PC-9 (cell line): ENCODE measurements at regions of chr4 and their contacts with region 1.

Region 1: DNA sequence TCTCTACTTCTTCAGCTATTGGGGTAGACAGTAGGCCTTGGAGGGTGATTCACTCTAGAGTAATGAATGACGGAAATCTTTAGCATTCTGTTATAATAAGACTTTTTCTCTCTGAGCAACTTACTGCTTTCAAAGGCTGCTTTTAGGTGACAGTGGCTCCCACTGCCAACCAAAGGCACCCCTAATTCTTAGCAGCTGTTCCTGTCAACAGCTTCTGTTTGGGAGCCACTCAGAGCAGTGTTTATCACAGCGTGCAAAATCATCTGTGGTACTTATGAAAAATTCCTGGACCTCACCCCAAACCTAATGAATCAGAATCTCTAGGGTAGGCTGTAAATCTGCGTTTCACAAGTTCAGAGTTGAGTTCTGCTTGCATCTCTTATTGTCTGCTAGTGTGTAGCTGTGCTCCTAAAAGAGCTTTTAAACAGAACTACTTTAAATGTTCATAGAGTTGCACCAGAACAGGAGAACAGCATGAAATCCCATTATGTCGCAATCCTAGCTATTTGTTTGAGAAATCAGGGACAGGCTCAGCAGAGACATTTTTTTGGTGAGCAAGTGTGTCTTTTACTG is 52.8 kb upstream of the POU4F2 start:
- DNase-seq: no peak
- H3K4me3 ChIP-seq: no peak overlapping the region
- H3K27ac ChIP-seq: no peak overlapping the region
- H3K4me1 ChIP-seq: no peaks in the 10 kb centered on the region
- H3K27me3 ChIP-seq: no peaks in the 10 kb centered on the region
- CTCF ChIP-seq: no peak

Region 2: DNA sequence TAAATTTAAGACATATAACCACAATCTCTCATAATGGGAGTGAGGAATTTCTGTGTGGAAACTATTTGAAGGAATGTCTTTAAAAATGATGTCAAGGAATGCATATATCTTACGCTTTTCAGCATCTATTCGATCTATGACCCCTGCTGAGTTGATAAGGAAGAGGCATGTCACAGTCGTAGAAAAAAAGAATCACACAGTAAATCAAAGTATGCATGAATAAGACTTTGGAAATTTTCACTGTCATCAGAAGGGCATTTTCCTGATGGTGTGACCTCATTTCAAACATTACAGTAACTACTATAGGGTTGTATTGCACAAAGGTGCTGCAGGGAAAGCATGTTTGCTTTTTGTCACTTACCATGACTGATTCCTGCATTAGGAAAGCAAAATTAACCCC is 330.0 kb before region 1 on chr4:
- CTCF ChIA-PET with region 1: no interaction called
- POLR2A ChIA-PET with region 1: interaction called, 11 read pairs
- intact Hi-C with region 1: no loop called
- DNase-seq: peak in 1 of 2 experiments; percentile 73
- H3K4me3 ChIP-seq: no peak overlapping the region
- H3K27ac ChIP-seq: no peak overlapping the region
- H3K4me1 ChIP-seq: peaks cover 23% of the 10 kb centered on the region
- H3K27me3 ChIP-seq: no peaks in the 10 kb centered on the region
- CTCF ChIP-seq: no peak

Region 3: GRCh38 chr4:147326591-147326990 is 740.7 kb after region 1 on chr4:
- CTCF ChIA-PET with region 1: no interaction called
- POLR2A ChIA-PET with region 1: no interaction called
- intact Hi-C with region 1: no loop called
- DNase-seq: no peak
- H3K4me3 ChIP-seq: no peak overlapping the region
- H3K27ac ChIP-seq: no peak overlapping the region
- H3K4me1 ChIP-seq: no peaks in the 10 kb centered on the region
- H3K27me3 ChIP-seq: no peaks in the 10 kb centered on the region
- CTCF ChIP-seq: no peak